Aorta (tissue), 5 donors: ENCODE measurements at regions of chr7 and their contacts with region 1.

Region 1: DNA sequence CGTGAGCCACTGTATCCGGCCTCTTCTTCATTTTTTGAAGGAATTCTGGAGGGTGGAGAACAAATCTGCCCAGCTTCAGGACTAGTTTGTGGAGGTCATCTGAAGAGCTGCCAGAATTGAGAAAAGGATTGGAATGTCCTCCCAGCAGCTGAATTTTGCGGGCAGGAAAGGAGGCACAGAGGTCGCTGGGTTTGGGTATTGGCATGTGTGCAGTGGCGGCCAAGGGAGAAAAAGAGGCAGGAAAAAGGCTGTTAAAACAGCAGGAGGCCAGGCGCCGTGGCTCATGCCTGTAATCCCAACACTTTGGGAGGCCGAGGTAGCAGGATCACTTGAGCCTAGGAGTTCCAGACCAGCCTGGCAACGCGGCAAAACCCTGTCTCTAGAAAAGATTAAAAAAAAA is 80.4 kb downstream of the HIP1 start:
- DNase-seq: peak in 1 of 2 donors; percentile 55
- ATAC-seq: peak; percentile 16
- H3K4me3 ChIP-seq: no peak overlapping the region
- H3K27ac ChIP-seq: peak overlapping the region; percentile 45 to 96
- H3K4me1 ChIP-seq: peaks cover 3 to 17% of the 10 kb centered on the region in 2 donors
- H3K27me3 ChIP-seq: no peaks in the 10 kb centered on the region

Region 2: DNA sequence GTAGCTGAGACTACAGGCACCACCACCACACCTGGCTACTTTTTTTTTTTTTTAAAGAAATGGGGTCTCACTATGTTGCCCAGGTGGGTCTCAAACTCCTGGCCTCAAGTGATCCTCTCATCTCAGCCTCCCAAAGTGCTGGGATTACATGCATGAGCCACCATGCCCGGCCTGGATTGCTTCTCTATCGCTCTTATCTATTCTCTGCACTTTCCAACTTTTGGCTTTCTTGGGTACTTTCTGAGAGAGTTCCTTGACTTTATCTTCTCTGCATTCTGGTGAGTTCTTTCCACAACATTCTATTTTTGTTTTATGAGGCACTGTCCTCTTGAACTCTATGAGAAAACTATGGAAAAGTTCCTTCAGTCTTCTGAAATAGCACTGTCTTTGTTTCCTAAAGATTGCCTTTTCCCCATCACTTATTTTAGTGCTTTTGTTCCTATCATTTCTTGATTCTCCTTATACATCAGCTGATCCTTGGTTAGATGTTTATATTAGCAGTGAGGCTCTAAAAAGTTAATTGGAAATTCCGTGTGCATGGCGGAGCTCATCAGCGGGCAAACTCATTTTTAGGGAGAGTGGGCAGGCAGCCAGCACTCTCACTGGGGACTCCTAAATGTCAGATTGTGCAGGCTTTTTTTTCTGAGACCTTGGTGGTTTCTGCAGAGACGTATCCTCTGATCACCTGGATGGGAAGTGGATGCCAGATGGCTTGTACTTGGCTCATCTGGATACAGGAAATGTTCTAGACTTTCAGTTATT is 36.5 kb after region 1 on chr7:
- intact Hi-C with region 1: loop called (anchors 5 kb)
- DNase-seq: peak in 1 of 2 donors; percentile 10
- ATAC-seq: no peak
- H3K4me3 ChIP-seq: no peak overlapping the region
- H3K27ac ChIP-seq: peak overlapping the region in 1 of 2 donors; percentile 17
- H3K4me1 ChIP-seq: peaks cover 2 to 3% of the 10 kb centered on the region in 2 donors
- H3K27me3 ChIP-seq: no peaks in the 10 kb centered on the region

Region 3: GRCh38 chr7:75711656-75712514 is 53.5 kb after region 1 on chr7:
- intact Hi-C with region 1: loop called (anchors 5 kb)
- DNase-seq: peak; percentile 47 to 55
- ATAC-seq: peak; percentile 82
- H3K4me3 ChIP-seq: peak overlapping the region in 1 of 2 donors; percentile 13
- H3K27ac ChIP-seq: peak overlapping the region; percentile 94 to 100
- H3K4me1 ChIP-seq: peaks cover 3% of the 10 kb centered on the region in 2 donors
- H3K27me3 ChIP-seq: no peaks in the 10 kb centered on the region

Region 4: DNA sequence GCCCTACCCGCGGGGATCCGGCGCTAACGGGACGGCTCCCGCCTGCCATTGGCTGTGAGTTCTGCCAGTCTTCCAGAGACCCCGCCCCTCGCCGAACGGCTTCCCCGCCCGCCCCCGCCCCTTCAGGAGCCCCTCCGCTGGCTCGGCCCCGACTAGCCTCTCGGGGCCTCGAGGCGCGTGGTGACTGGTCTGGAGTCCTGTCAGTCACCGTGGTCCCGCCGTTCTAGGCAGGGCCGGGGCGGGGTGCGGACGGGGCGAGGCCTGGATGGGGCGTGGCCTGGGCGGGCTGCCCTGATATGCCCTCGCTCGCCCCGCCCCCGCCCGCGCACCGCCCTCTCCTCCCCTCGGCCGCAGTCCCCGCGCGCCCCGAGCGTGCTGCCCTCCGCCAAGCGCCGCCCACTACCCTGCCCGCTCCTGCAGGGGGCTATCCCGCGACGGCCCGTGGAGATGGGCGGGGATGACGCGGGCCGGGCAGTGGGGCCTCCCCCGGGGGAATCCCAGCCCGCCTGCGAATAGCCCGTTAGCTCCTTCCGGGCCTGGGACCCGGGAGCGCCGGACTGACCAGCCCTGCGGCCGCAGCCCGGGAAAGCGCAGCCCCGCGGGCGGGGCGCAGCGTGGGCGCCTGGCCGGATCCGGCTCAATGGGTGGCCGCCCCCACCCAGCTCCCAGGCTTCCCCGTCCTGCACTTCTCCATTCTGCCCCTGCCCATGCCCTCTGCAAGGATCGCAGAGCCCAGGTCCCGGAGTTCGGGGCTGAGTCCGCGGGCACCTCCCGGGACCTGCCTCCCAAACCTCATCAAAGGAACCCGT is 80.8 kb after region 1 on chr7:
- intact Hi-C with region 1: loop called in 1 of 2 experiments (anchors 5 kb)
- DNase-seq: peak; percentile 100
- ATAC-seq: peak; percentile 98
- H3K4me3 ChIP-seq: peak overlapping the region; percentile 84 to 93
- H3K27ac ChIP-seq: peak overlapping the region in 1 of 2 donors; percentile 52
- H3K4me1 ChIP-seq: peaks cover 0 to 3% of the 10 kb centered on the region in 2 donors
- H3K27me3 ChIP-seq: no peaks in the 10 kb centered on the region